ENCODE measurements at regions of chr7 and their contacts with region 1.

Region 1: DNA sequence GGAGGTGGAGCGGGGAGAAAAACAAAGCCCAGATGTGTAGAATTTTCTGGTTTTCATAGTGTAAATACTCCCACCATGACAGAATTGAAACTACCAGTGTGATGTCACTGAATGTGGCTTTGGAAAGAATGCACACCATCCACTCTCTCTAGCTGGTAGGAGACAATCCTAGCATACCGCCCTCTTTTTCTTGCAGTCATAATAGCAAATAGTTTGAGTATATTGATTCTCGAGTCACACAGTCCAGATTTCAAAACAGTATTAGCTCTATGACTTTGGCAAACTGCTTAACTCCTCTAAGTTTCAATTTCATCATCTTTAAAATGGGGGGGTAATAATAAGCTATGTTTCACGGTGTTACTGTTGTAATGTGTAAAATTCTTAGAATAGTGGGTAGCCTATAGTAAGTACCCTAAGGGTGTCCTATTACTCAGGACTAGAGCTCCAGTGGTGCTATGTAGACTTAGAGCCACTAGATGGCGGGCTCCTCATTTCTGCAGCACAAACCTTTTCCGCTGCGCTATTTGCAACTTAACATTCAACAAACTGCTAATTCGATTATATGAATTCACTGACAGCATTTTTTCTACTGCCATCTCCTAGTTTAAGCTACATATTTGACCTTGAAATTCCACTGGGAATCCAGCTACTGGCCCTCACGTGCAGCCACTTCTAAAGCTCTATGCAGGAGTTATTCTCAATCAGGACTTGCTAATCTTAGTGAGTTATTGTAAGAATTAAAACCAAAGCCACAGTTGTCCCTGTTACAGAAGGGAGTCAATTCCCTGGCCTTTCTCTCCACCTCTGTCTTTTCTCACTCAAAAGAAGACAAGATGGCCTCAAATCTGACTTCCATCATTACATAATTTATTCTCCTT is 18.7 kb downstream of the TAS2R40 start:
- DNase-seq: peak; percentile 83 to 89 (median 88)
- H3K4me3 ChIP-seq: no peak overlapping the region
- H3K27ac ChIP-seq: no peak overlapping the region
- H3K4me1 ChIP-seq: peaks cover 4 to 24% (median 13%) of the 10 kb centered on the region in 4 experiments
- H3K27me3 ChIP-seq: no peaks in the 10 kb centered on the region

Region 2: DNA sequence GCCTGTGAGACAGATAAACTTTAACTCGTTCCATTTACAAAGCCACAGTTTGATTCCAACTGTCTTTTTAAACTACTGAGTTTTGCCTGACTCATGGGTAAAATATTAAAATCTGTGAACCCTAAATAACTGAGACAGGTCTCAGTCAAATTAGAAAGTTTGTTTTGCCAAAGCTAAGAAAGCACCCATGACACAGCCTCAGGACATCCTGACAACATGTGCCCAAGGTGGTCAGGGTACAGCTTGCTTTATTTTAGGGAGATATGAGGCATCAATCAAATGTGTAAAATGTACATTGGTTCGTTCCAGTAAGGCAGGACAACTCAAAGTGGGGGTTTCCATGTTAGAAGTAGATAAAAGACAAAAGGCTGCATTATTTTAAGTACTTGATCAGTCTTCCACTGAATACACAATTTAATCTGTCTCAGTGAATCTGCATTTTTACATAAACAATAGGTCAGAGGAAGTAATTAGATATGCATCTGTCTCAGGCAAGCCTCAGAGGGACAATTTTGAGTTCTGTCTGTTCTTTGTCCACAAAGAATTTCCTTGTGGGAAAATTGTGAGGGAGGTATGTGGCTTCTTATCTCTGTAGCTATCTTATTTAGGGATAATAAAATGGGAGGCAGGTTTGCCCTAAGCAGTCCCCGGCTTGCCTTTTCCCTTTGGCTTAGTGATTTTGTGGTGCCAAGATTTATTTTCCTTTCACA is 119.7 kb before region 1 on chr7:
- CTCF ChIA-PET with region 1: no interaction called
- POLR2A ChIA-PET with region 1: no interaction called
- DNase-seq: no peak
- H3K4me3 ChIP-seq: no peak overlapping the region
- H3K27ac ChIP-seq: no peak overlapping the region
- H3K4me1 ChIP-seq: peaks cover 0 to 6% (median 0%) of the 10 kb centered on the region in 4 experiments
- H3K27me3 ChIP-seq: no peaks in the 10 kb centered on the region

Region 3: DNA sequence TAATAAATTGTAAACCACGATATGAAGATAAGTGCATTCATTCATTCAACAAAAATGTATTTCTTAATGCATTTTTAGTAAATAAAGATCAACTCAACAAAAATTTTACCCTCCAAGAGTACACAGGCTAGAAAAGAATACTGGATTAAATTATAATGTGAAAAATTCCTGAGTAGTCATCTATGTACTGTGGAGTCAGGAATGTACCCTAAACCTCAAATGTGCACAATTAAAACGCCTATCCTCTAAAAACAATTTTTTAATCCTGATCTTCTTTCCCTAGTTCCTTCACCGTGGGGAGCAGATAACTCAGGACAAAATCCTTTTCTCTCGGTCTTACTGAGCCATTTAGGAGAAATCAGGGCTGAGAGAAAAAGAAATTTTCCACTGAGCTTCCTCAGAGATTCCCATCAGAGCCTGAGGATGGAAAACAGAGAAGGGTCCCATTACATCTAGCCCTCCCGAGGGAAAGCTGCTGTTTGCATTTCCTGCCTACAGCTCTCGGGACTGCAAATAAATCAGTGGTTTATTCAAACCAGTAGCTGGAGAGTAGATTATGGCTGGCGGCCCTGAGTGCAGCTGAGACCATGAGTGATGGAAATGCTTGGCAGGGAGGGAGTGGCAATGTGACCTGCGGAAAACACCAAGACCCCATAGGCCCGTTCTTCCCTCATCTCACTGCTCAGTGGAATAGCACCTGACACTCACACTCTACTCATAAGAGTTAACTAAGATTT is 11.3 kb before region 1 on chr7:
- CTCF ChIA-PET with region 1: interaction called, 23 read pairs
- POLR2A ChIA-PET with region 1: no interaction called
- DNase-seq: no peak
- H3K4me3 ChIP-seq: no peak overlapping the region
- H3K27ac ChIP-seq: no peak overlapping the region
- H3K4me1 ChIP-seq: no peaks in the 10 kb centered on the region
- H3K27me3 ChIP-seq: no peaks in the 10 kb centered on the region

Region 4: GRCh38 chr7:143263266-143264195 is 23.0 kb after region 1 on chr7 and contains the start of gene GSTK1:
- CTCF ChIA-PET with region 1: interaction called, 27 read pairs
- POLR2A ChIA-PET with region 1: no interaction called
- DNase-seq: peak; percentile 50 to 70 (median 61)
- H3K4me3 ChIP-seq: peak within 1 kb of the TSS; percentile 82 to 98 (median 96)
- H3K27ac ChIP-seq: peak within 1 kb of the TSS in 1 of 2 experiments; percentile 85
- H3K4me1 ChIP-seq: peaks cover 4 to 42% (median 26%) of the 10 kb centered on the region in 4 experiments
- H3K27me3 ChIP-seq: no peaks in the 10 kb centered on the region

Region 5: DNA sequence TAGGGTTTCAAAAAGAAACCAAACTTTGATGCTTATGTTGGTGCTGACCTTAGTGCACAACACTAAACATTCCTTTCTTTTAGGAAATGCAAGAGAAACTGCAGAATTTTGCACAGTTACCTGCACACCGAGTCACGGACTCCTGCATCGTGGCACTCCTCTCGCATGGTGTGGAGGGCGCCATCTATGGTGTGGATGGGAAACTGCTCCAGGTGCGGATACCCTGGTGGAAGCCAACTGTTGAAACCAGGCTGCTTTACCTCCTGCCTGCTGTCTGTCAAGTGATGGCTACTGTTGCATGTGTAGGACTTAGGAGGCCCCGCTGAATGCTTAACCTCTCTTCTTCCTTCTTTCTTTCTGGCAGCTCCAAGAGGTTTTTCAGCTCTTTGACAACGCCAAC is 59.3 kb after region 1 on chr7:
- CTCF ChIA-PET with region 1: interaction called, 108 read pairs
- POLR2A ChIA-PET with region 1: no interaction called
- DNase-seq: peak; percentile 34 to 61 (median 49)
- H3K4me3 ChIP-seq: no peak overlapping the region
- H3K27ac ChIP-seq: peak overlapping the region; percentile 95 to 98
- H3K4me1 ChIP-seq: peaks cover 45 to 71% (median 60%) of the 10 kb centered on the region in 4 experiments
- H3K27me3 ChIP-seq: no peaks in the 10 kb centered on the region

Region 6: DNA sequence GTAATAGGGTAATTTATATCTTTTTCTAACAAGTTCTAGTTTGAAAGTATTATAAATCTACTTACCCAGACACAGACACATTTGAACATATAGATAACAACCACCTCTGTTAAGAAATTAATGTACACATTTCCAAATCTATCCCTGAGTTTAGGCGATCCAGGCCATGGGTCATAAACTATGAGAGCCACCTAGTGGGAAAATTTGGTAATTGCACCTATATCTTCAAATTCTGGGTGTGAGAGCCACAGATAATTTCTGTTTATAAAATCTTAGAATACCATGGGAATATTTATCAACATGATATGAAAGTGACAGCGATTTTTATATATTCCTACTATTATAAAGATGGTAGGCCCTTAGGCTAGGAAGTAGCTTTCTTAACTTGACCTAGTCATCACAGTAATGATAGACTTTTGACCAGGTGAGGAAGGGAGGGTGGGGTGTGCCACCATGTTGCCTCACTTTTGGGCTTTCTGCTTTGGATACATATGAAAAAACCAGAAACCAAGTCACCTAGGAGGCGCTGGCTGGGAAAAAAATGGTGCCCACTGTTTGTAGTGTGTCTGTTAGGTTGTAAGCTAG is 176.1 kb after region 1 on chr7:
- CTCF ChIA-PET with region 1: interaction called, 35 read pairs
- POLR2A ChIA-PET with region 1: no interaction called
- DNase-seq: peak; percentile 52 to 71 (median 56)
- H3K4me3 ChIP-seq: no peak overlapping the region
- H3K27ac ChIP-seq: no peak overlapping the region
- H3K4me1 ChIP-seq: peaks cover 7 to 15% (median 11%) of the 10 kb centered on the region in 4 experiments
- H3K27me3 ChIP-seq: no peaks in the 10 kb centered on the region

Measured in common myeloid progenitor, CD34-positive (primary cell).